ENCODE measurements at regions of chr20 and their contacts with region 1.

Region 1: GRCh38 chr20:17898548-17898994 is 70.0 kb downstream of the SNX5 start:
- DNase-seq: peak; percentile 69 to 85 (median 72)
- ATAC-seq: peak; percentile 47 to 56
- H3K4me3 ChIP-seq: no peak overlapping the region
- H3K27ac ChIP-seq: no peak overlapping the region
- H3K4me1 ChIP-seq: peaks cover 3% of the 10 kb centered on the region
- H3K27me3 ChIP-seq: no peaks in the 10 kb centered on the region

Region 2: GRCh38 chr20:17654649-17655285 is 243.8 kb before region 1 on chr20:
- intact Hi-C with region 1: loop called in 3 of 4 experiments (anchors 10 kb)
- DNase-seq: peak in 2 of 3 donors; percentile 76 to 86
- ATAC-seq: no peak
- H3K4me3 ChIP-seq: no peak overlapping the region
- H3K27ac ChIP-seq: no peak overlapping the region
- H3K4me1 ChIP-seq: peaks cover 7% of the 10 kb centered on the region
- H3K27me3 ChIP-seq: no peaks in the 10 kb centered on the region